Left ventricle myocardium inferior (tissue), 1 donor: ENCODE measurements at regions of chr12 and their contacts with region 1.

Region 1: GRCh38 chr12:52582971-52583456 is 9.4 kb upstream of the KRT74 start:
- DNase-seq: peak; percentile 31
- H3K4me3 ChIP-seq: no peak overlapping the region
- H3K27ac ChIP-seq: no peak overlapping the region
- H3K4me1 ChIP-seq: no peaks in the 10 kb centered on the region
- H3K27me3 ChIP-seq: peaks cover 50% of the 10 kb centered on the region
- CTCF ChIP-seq: peak; percentile 79

Region 2: GRCh38 chr12:52380271-52380694 is 202.7 kb before region 1 on chr12:
- intact Hi-C with region 1: no loop called
- DNase-seq: no peak
- H3K4me3 ChIP-seq: no peak overlapping the region
- H3K27ac ChIP-seq: no peak overlapping the region
- H3K4me1 ChIP-seq: no peaks in the 10 kb centered on the region
- H3K27me3 ChIP-seq: peaks cover 49% of the 10 kb centered on the region
- CTCF ChIP-seq: peak; percentile 64

Region 3: GRCh38 chr12:52486166-52487105 is 96.6 kb before region 1 on chr12:
- intact Hi-C with region 1: no loop called
- DNase-seq: no peak
- H3K4me3 ChIP-seq: no peak overlapping the region
- H3K27ac ChIP-seq: no peak overlapping the region
- H3K4me1 ChIP-seq: no peaks in the 10 kb centered on the region
- H3K27me3 ChIP-seq: peaks cover 77% of the 10 kb centered on the region
- CTCF ChIP-seq: no peak

Region 4: DNA sequence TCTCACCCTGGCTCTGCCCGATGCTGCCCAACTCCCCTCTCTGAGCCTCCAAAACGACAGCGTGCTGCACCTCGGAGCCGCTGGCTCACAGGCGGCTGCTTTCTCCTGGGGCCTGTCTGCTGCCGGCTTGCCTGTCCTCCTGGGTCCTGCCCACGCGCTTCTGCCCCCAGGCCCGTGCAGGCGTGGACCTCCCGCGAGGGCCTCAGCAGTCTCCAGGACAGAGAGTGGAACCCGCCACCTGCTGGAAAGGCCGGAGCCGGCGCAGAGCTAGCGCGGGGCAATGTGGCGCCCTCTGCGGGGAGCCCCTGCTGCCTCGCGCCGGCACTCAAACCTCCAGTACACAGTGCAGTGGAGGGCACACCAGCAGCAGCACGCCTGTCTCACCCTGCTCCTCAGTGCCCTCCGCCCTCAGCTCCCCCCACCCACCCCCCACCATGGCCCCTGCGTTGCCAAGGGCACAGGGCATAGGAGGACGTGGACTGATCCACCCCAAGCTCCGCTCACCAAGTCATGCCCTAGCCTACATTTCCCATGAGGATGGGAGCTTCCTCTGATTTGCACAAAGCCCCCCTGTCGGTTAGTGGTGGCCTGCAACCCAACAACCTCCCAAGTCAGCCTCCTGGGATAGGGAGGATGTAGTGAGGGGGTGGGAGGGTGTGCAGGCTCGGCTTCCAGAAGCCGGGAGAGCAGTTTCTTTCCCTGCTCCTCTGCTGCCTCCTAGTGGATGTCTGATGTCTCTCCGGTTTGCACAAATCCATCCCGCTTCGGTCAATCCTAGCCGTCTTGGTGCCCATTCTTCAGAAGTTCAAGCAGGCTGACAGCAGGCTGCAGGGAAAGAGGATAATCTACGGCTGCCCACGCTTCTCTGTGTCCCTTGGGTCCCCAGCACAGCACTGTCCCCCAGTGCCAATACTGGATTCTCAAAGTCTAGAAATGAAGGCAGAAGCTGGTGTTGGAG is 296.7 kb after region 1 on chr12:
- intact Hi-C with region 1: loop called (anchors 10 kb)
- DNase-seq: peak; percentile 68
- H3K4me3 ChIP-seq: peak overlapping the region; percentile 54
- H3K27ac ChIP-seq: peak overlapping the region; percentile 33
- H3K4me1 ChIP-seq: peaks cover 21% of the 10 kb centered on the region
- H3K27me3 ChIP-seq: peaks cover 23% of the 10 kb centered on the region
- CTCF ChIP-seq: peak; percentile 71

Region 5: GRCh38 chr12:52980693-52981423 is 397.8 kb after region 1 on chr12:
- intact Hi-C with region 1: loop called (anchors 10 kb)
- DNase-seq: peak; percentile 84
- H3K4me3 ChIP-seq: no peak overlapping the region
- H3K27ac ChIP-seq: no peak overlapping the region
- H3K4me1 ChIP-seq: no peaks in the 10 kb centered on the region
- H3K27me3 ChIP-seq: peaks cover 66% of the 10 kb centered on the region
- CTCF ChIP-seq: peak; percentile 98